ENCODE measurements at regions of chr4 and their contacts with region 1.

Region 1: DNA sequence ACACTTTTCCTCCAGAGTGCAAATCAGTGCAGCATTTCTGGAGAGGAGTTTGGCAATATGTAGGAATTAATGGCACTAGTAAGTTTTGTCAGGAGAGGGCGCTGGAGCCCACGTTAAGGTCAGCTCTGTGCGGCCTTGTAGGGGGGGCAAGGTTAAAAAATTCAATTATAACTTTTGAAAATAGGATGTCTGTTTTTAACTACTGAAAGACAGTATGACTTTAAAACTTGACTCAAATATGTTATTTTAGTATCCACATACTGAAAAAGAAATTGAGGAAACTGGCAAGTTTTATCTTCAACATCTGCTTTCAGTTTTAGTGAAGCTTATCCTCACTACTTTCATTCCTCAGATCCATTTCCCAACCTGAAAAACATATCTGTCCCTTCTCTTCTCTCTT is 30.9 kb upstream of the HSD17B13 start:
- DNase-seq: peak; percentile 54
- ATAC-seq: no peak
- H3K4me3 Mint-ChIP-seq: no peak overlapping the region
- H3K27ac Mint-ChIP-seq: no peak overlapping the region
- H3K4me1 Mint-ChIP-seq: no peaks in the 10 kb centered on the region
- H3K27me3 Mint-ChIP-seq: no peaks in the 10 kb centered on the region

Region 2: GRCh38 chr4:87370068-87370467 is 16.5 kb after region 1 on chr4:
- CTCF ChIA-PET with region 1: no interaction called
- POLR2A ChIA-PET with region 1: no interaction called
- DNase-seq: no peak
- ATAC-seq: no peak
- H3K4me3 Mint-ChIP-seq: no peak overlapping the region
- H3K27ac Mint-ChIP-seq: no peak overlapping the region
- H3K4me1 Mint-ChIP-seq: no peaks in the 10 kb centered on the region
- H3K27me3 Mint-ChIP-seq: no peaks in the 10 kb centered on the region

Region 3: DNA sequence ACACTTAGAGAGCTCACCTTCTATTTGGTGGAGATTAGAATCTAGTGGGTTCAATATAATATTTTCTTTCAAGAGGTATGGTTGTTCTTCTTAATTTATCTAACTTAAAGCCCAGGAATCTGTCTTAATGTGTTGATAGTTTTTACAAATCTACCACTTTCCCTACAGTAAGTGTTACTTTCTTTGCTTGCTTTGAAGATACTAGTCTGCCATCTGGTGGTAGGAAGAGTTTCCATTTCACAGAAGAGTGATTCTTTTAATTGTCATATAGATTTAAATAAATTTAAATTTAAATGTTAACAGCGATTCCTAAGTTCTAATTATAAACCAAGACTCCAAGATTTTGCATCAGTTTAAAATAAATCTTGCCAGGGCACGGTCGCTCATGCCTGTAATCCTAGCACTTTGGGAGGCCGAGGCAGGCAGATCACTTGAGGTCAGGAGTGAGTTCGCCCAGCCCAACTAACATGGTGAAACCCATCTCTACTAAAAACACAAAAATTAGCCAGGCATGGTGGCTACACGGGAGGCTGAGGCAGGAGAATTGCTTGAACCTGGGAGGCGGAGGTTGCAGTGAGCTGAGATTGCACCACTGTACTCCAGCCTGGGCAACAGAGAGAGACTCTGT is 112.3 kb after region 1 on chr4:
- CTCF ChIA-PET with region 1: interaction called, 20 read pairs
- POLR2A ChIA-PET with region 1: no interaction called
- DNase-seq: peak; percentile 27
- ATAC-seq: no peak
- H3K4me3 Mint-ChIP-seq: no peak overlapping the region
- H3K27ac Mint-ChIP-seq: no peak overlapping the region
- H3K4me1 Mint-ChIP-seq: no peaks in the 10 kb centered on the region
- H3K27me3 Mint-ChIP-seq: no peaks in the 10 kb centered on the region

Measured in activated CD8-positive, alpha-beta T cell treated with anti-CD3 and anti-CD28 coated beads, Interleukin-2, amount 10 ng/mL, durations not matched to agents 7 days and 5 days (primary cell).